ENCODE measurements at regions of chr19 and their contacts with region 1.

Region 1: DNA sequence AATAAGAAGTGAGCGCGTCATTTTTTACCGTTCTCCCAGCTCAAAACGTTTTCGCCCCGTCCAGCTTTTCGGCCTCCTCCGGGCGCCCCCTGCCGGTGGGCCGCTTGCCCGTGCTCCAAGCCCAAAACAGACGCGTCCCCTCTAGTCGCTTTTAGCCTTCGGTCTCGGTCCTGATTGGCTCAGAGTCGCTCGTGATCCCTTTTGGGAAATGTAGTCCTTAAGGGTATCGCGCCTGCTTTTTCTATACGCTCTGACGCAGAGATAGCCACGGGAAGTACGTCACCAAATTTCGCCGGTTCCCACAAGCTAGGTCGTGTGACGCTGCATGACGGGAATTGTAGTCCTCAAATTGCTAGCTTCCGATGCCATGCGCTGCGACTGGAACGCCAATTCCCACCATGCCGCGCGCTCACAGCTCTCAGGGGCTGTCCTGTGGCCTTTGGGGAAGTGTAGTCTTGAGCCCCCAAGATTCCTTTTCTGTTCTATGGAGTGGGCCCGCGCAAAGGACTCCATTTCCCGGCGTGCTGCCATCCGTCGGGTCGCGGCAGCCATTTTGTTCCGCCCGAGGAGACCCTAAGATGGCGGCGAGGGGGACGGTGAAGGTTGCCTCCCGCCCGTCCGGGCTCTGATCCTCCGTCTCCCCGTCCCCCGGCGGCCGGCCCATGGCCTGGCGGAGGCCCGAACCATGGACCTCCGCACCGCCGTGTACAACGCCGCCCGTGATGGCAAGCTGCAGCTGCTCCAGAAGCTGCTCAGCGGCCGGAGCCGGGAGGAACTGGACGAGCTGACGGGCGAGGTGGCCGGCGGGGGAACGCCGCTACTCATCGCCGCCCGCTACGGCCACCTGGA is at the start of gene FEM1A:
- DNase-seq: peak; percentile 99
- H3K4me3 Mint-ChIP-seq: peak within 1 kb of the TSS; percentile 89
- H3K27ac Mint-ChIP-seq: peak within 1 kb of the TSS; percentile 82
- H3K4me1 Mint-ChIP-seq: peaks cover 15% of the 10 kb centered on the region
- H3K27me3 Mint-ChIP-seq: no peaks in the 10 kb centered on the region
- total RNA-seq, gene FEM1A: 18.1 and 18.6 TPM in 2 replicates

Region 2: GRCh38 chr19:4669723-4670480 is 121.5 kb before region 1 on chr19 and contains the start of gene MYDGF:
- intact Hi-C with region 1: loop called (anchors 1 kb)
- DNase-seq: peak; percentile 89
- H3K4me3 Mint-ChIP-seq: peak within 1 kb of the TSS; percentile 87
- H3K27ac Mint-ChIP-seq: peak within 1 kb of the TSS; percentile 72
- H3K4me1 Mint-ChIP-seq: peaks cover 11% of the 10 kb centered on the region
- H3K27me3 Mint-ChIP-seq: no peaks in the 10 kb centered on the region
- total RNA-seq, gene MYDGF: 105 and 110 TPM in 2 replicates

Region 3: GRCh38 chr19:4723367-4724187 is 67.8 kb before region 1 on chr19 and contains the start of gene DPP9:
- intact Hi-C with region 1: loop called (anchors 1 kb)
- DNase-seq: peak; percentile 97
- H3K4me3 Mint-ChIP-seq: peak within 1 kb of the TSS; percentile 100
- H3K27ac Mint-ChIP-seq: peak within 1 kb of the TSS; percentile 95
- H3K4me1 Mint-ChIP-seq: peaks cover 12% of the 10 kb centered on the region
- H3K27me3 Mint-ChIP-seq: no peaks in the 10 kb centered on the region
- total RNA-seq, gene DPP9: 84.8 and 87.2 TPM in 2 replicates

Region 4: DNA sequence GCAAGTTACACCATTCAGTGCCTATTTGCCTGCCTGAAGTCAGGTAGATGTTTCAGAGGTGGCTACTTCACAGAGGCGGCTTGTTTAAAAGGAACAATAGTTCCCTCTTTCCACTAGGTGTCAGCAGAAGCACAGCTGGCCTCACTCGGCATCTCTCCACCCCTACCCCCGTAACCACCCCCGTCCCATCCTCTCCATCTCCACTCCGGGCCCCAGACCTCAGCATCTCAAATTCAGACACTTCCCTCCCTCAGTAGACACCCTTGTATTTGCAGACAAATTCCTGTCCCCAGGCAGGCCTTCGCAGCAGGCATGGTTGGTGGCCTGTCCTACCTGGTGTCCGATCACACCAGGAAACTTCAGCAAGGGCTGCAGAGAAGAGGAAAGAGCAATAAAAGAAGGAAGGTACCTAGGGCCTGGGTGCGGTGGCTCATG is 58.7 kb before region 1 on chr19:
- intact Hi-C with region 1: loop called (anchors 1 kb)
- DNase-seq: peak; percentile 44
- H3K4me3 Mint-ChIP-seq: no peak overlapping the region
- H3K27ac Mint-ChIP-seq: no peak overlapping the region
- H3K4me1 Mint-ChIP-seq: peaks cover 8% of the 10 kb centered on the region
- H3K27me3 Mint-ChIP-seq: peaks cover 2% of the 10 kb centered on the region

Region 5: GRCh38 chr19:4815426-4816201 is 24.2 kb after region 1 on chr19:
- intact Hi-C with region 1: loop called (anchors 1 kb)
- DNase-seq: peak; percentile 63
- H3K4me3 Mint-ChIP-seq: peak overlapping the region; percentile 70
- H3K27ac Mint-ChIP-seq: peak overlapping the region; percentile 40
- H3K4me1 Mint-ChIP-seq: peaks cover 14% of the 10 kb centered on the region
- H3K27me3 Mint-ChIP-seq: no peaks in the 10 kb centered on the region

Region 6: GRCh38 chr19:5790573-5791520 is 999.5 kb after region 1 on chr19 and contains the start of gene DUS3L:
- intact Hi-C with region 1: loop called (anchors 5 kb)
- DNase-seq: peak; percentile 95
- H3K4me3 Mint-ChIP-seq: peak within 1 kb of the TSS; percentile 98
- H3K27ac Mint-ChIP-seq: peak within 1 kb of the TSS; percentile 100
- H3K4me1 Mint-ChIP-seq: peaks cover 5% of the 10 kb centered on the region
- H3K27me3 Mint-ChIP-seq: no peaks in the 10 kb centered on the region
- total RNA-seq, gene DUS3L: 74.0 and 84.3 TPM in 2 replicates

Measured in activated T-helper 2 cell treated with anti-CD3 and anti-CD28 coated beads, Interferon-gamma antibody, Interleukin-2, Interleukin-4, amounts not matched to agents 10 μg/mL and 5 μg/mL and 100 μg/mL, durations not matched to agents 14 hours and 24 hours and 36 hours (primary cell).